ENCODE measurements at regions of chr7 and their contacts with region 1.

Region 1: DNA sequence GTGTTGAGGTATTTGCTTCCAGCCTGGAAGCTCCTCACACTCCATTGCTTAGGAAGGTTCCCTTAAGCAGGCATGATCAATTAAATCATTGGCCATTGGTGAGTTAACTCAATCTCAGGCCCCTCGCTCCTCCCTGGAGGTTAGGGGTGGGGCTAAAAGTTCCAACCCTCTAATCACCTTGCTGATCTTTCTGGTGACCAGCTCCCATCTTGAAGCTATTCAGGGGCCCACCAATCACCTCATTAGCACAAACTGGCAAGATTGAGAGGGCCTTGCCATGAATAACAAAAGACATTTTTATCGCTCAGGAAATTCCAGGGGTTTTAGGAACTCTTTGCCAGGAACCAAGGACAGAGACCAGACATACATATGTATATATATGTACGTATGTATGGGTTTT is 58.4 kb downstream of the AGK start:
- DNase-seq: no peak
- ATAC-seq: no peak
- H3K4me3 ChIP-seq: no peak overlapping the region
- H3K27ac ChIP-seq: no peak overlapping the region
- H3K4me1 ChIP-seq: no peaks in the 10 kb centered on the region
- H3K27me3 ChIP-seq: no peaks in the 10 kb centered on the region
- CTCF ChIP-seq: no peak

Region 2: DNA sequence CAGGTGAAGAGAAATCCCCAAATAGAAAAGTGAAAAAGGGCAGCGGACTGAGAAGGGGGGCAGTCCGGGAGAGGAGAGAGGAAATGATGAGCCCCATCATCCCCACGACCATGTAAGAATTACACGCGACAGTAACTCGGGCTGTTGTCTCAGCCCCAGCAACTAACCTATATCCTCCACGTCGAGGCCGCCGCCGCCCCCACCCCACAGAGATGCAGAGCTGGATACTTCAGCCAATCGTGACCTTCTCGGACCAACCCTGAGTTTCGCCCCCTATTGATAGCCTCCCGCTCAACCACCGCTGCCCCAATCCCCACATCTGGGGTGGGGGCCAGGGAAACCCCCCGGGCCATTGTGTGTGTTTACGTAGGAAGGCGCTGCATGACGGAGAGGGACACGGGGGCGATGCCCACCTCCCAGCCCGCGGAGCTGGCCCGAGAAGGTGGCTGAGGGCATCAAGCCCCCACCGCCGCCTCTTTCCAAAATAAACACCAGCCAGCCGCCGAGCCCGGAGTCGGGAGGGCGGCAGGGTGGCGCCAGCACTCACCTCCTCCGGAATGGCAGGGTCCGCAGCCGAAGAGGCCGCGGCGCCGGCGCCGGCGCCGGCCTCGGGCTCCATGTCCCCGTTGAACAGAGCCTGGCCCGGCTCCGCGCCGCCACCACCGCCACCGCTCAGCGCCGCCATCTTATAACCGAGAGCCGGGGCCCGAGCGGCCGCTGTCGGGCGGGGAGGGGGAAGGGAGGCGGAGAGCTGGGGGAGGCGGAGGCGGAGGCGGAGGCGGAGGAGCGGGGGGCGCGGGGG is 685.3 kb before region 1 on chr7:
- intact Hi-C with region 1: no loop called
- DNase-seq: peak; percentile 74 to 89 (median 80)
- ATAC-seq: peak; percentile 82 to 88 (median 86)
- H3K4me3 ChIP-seq: peak overlapping the region; percentile 56 to 94 (median 86)
- H3K27ac ChIP-seq: peak overlapping the region; percentile 97 to 99 (median 98)
- H3K4me1 ChIP-seq: peaks cover 14 to 35% (median 27%) of the 10 kb centered on the region in 3 donors
- H3K27me3 ChIP-seq: no peaks in the 10 kb centered on the region
- CTCF ChIP-seq: no peak

Region 3: GRCh38 chr7:141573511-141573910 is 36.1 kb before region 1 on chr7:
- intact Hi-C with region 1: loop called in 1 of 3 experiments (anchors 5 kb)
- DNase-seq: no peak
- ATAC-seq: no peak
- H3K4me3 ChIP-seq: no peak overlapping the region
- H3K27ac ChIP-seq: no peak overlapping the region
- H3K4me1 ChIP-seq: no peaks in the 10 kb centered on the region
- H3K27me3 ChIP-seq: no peaks in the 10 kb centered on the region
- CTCF ChIP-seq: no peak

Measured in pancreas (tissue), 10 donors.